ENCODE measurements at regions of chr12 and their contacts with region 1.

Region 1: DNA sequence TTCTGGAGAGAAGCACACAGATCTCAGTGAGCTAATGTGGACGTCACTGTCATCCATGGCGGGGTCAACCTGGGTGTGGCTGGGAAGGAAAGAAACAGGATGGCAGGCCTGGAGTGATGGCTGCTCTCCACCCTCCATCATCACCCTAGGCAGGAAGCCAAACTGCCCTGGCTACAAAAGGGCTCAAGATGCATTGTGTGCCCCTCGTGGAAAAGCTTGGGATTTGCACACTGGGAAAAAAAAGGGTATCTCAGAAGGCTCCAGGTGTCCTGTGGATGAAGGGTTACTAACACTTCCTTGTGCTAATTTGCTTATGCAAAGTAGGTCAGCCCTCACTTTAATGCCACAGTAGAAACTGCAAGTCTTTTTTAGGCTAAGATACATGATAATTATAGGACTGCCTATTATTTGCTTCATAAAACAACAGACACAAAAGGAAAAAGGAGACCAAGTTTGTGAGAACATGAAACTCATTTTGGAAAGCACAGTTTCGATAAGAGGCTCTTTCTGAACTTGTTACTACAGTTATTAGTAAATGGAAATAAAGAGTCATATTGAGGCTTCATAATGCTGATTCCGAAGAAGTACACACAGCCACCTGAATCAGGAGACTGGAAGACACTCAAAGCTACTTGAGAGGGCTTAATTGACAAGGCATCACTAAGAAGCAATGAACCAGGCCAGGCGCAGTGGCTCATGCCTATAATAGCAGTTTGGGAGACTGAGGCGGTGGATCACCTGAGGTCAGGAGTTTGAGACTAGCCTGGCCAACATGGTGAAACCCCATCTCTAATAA is 18.9 kb downstream of the RFC5 start:
- H3K4me3 Mint-ChIP-seq: no peak overlapping the region
- H3K27ac Mint-ChIP-seq: no peak overlapping the region
- H3K4me1 Mint-ChIP-seq: no peaks in the 10 kb centered on the region
- H3K27me3 Mint-ChIP-seq: no peaks in the 10 kb centered on the region

Region 2: DNA sequence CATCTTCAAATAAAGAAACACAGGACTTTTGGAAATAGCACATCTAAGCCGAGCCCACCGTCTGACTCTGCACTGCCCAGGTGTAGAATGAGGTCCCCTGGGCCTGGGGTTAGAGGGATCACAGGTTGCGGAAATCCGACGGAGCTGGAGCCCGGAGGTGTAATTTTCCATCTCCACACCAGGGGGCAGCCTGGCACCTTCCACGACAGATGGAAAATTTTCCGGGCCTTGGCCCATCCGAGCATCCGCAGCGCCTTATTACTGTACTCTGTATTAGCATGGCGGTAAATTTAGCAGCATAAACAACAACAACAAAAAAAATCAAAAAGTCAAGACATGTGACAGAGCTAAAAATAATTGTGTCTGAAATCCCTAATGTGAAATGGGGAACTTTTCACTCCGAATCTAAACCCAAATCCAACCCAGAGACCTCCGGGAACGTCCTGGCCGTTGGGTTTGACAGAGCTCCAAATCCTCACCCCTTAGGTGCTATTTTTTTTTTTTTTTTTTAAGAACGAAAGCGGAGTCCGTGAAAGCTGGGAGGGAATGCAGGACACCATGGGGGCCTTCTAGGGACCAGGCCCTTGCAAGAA is 160.5 kb before region 1 on chr12:
- intact Hi-C with region 1: loop called (anchors 10 kb)
- H3K4me3 Mint-ChIP-seq: no peak overlapping the region
- H3K27ac Mint-ChIP-seq: no peak overlapping the region
- H3K4me1 Mint-ChIP-seq: no peaks in the 10 kb centered on the region
- H3K27me3 Mint-ChIP-seq: peaks cover 28% of the 10 kb centered on the region

Region 3: GRCh38 chr12:117994551-117995438 is 40.6 kb before region 1 on chr12:
- intact Hi-C with region 1: no loop called
- H3K4me3 Mint-ChIP-seq: no peak overlapping the region
- H3K27ac Mint-ChIP-seq: no peak overlapping the region
- H3K4me1 Mint-ChIP-seq: no peaks in the 10 kb centered on the region
- H3K27me3 Mint-ChIP-seq: peaks cover 1% of the 10 kb centered on the region